Activated CD4-positive, alpha-beta T cell treated with anti-CD3 and anti-CD28 coated beads for 36 hours (primary cell): ENCODE measurements at regions of chr11 and their contacts with region 1.

Region 1: DNA sequence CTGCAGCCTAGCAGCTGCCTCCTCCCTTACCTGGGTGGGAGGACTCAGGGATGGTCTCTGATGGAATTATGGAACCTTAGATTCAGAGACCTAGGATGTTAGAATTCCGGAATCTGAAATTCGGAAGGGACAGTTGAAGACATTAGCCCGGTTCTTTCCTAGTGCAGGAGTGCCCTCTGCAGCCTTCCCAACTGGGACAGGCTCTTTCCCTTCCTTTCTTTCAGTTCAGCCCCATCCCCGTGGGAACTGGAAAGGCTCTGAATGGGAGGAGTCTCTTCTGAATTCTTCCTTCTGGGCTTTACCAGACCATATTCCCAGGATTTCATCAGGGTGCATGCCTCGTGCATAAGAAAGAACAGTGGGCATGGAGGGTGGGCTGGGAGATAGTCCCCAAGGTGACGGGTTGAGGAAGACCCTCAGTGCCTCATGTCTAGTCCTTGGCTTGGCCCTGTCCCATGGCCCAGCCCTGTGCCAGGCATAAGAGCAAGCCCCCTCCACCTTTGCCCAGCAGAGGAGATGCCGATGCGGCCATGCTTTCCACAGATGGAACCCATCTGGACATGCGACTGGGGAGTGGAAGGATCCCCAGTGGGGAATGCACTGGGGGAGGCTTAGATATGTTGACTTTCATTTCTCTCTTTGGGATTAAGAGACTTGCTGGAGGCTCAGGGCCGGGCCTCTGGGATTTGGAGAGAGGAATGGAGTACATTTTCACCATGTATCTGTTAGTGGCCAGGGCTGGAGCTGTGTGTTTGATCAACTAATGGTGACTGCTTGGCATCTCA is 14.4 kb downstream of the DNAJB13 start:
- DNase-seq: no peak
- ATAC-seq: no peak
- H3K4me3 Mint-ChIP-seq: no peak overlapping the region
- H3K27ac Mint-ChIP-seq: no peak overlapping the region
- H3K4me1 Mint-ChIP-seq: peaks cover 44% of the 10 kb centered on the region
- H3K27me3 Mint-ChIP-seq: no peaks in the 10 kb centered on the region

Region 2: GRCh38 chr11:74033046-74033445 is 67.8 kb after region 1 on chr11:
- CTCF ChIA-PET with region 1: no interaction called
- POLR2A ChIA-PET with region 1: no interaction called
- intact Hi-C with region 1: loop called in 1 of 2 experiments (anchors 2 kb)
- DNase-seq: peak; percentile 9
- ATAC-seq: no peak
- H3K4me3 Mint-ChIP-seq: no peak overlapping the region
- H3K27ac Mint-ChIP-seq: no peak overlapping the region
- H3K4me1 Mint-ChIP-seq: peaks cover 18% of the 10 kb centered on the region
- H3K27me3 Mint-ChIP-seq: no peaks in the 10 kb centered on the region

Region 3: GRCh38 chr11:74090701-74091100 is 125.4 kb after region 1 on chr11:
- CTCF ChIA-PET with region 1: interaction called, 4 read pairs
- POLR2A ChIA-PET with region 1: no interaction called
- intact Hi-C with region 1: loop called (anchors 1 to 5 kb)
- DNase-seq: no peak
- ATAC-seq: no peak
- H3K4me3 Mint-ChIP-seq: no peak overlapping the region
- H3K27ac Mint-ChIP-seq: no peak overlapping the region
- H3K4me1 Mint-ChIP-seq: no peaks in the 10 kb centered on the region
- H3K27me3 Mint-ChIP-seq: no peaks in the 10 kb centered on the region

Region 4: GRCh38 chr11:74255741-74256369 is 290.6 kb after region 1 on chr11:
- CTCF ChIA-PET with region 1: interaction called, 4 read pairs
- POLR2A ChIA-PET with region 1: no interaction called
- intact Hi-C with region 1: loop called (anchors 1 to 10 kb)
- DNase-seq: peak; percentile 70
- ATAC-seq: peak; percentile 84
- H3K4me3 Mint-ChIP-seq: no peak overlapping the region
- H3K27ac Mint-ChIP-seq: no peak overlapping the region
- H3K4me1 Mint-ChIP-seq: no peaks in the 10 kb centered on the region
- H3K27me3 Mint-ChIP-seq: no peaks in the 10 kb centered on the region

Region 5: GRCh38 chr11:74321487-74322188 is 356.4 kb after region 1 on chr11:
- CTCF ChIA-PET with region 1: no interaction called
- POLR2A ChIA-PET with region 1: no interaction called
- intact Hi-C with region 1: loop called in 1 of 2 experiments (anchors 2 kb)
- DNase-seq: peak; percentile 54
- ATAC-seq: peak; percentile 33
- H3K4me3 Mint-ChIP-seq: no peak overlapping the region
- H3K27ac Mint-ChIP-seq: no peak overlapping the region
- H3K4me1 Mint-ChIP-seq: no peaks in the 10 kb centered on the region
- H3K27me3 Mint-ChIP-seq: no peaks in the 10 kb centered on the region